Ascending aorta (tissue), 2 donors: ENCODE measurements at regions of chr4 and their contacts with region 1.

Region 1: DNA sequence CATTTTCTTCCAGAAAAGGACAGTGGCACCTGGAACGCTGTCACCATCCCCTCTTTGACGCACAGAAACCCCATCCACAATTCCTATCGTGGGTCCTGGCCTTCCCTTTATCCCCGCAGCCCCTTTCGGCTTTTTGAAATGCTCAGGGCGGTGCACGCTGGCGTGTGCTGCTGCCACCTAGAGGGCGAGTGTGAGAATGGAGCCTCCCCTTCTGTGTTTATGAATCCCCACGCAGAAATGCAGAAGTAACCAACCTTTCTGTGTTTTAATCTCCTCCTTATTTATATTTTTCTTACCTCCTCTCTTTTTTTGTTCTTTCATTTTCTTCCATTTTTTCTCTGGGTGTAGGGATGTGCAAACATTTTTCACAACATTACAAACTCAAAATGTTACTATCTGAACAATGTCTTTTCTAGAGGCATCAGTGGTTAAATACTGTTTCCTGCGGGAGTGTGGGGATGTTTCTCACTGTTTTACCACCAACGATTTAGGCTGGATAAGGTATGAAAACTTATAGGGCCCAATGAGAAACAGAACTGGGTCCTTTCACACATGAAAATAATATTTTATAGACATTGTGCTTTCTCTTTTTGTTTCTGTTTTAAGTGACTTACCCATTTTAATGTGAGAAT is 50.0 kb downstream of the TMA16 start:
- DNase-seq: peak in 1 of 2 donors; percentile 77
- H3K4me3 ChIP-seq: peak overlapping the region; percentile 34 to 53
- H3K27ac ChIP-seq: no peak overlapping the region
- H3K4me1 ChIP-seq: no peaks in the 10 kb centered on the region
- H3K27me3 ChIP-seq: no peaks in the 10 kb centered on the region
- CTCF ChIP-seq: peak; percentile 56 to 93 (median 90)

Region 2: GRCh38 chr4:162497564-162498167 is 1046.9 kb before region 1 on chr4:
- intact Hi-C with region 1: loop called (anchors 2 kb)
- DNase-seq: no peak
- H3K4me3 ChIP-seq: peak overlapping the region in 1 of 2 donors; percentile 5
- H3K27ac ChIP-seq: no peak overlapping the region
- H3K4me1 ChIP-seq: no peaks in the 10 kb centered on the region
- H3K27me3 ChIP-seq: no peaks in the 10 kb centered on the region
- CTCF ChIP-seq: peak; percentile 67 to 88 (median 77)

Region 3: DNA sequence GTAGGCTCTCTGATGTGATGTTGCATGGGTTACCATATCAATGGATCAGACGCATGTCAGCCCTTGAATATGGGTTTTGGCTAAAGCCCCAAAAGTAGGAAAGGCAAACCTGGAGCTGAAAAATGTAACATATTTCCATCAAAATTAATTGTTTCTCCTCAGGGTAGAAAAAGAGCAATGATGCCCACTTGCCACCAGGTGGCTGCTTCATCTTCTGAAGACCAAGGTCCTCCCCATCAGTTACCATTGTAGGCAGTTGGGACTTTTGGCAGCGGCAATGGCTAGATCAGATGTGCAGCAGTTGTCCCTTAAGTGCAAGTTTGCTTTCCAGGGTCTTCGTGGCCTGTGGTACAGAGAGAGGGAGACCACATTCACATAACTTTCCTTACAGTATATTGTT is 496.1 kb before region 1 on chr4:
- intact Hi-C with region 1: loop called (anchors 10 kb)
- DNase-seq: no peak
- H3K4me3 ChIP-seq: no peak overlapping the region
- H3K27ac ChIP-seq: no peak overlapping the region
- H3K4me1 ChIP-seq: peaks cover 0 to 9% of the 10 kb centered on the region in 2 donors
- H3K27me3 ChIP-seq: no peaks in the 10 kb centered on the region
- CTCF ChIP-seq: peak in 1 of 3 experiments; percentile 35

Region 4: DNA sequence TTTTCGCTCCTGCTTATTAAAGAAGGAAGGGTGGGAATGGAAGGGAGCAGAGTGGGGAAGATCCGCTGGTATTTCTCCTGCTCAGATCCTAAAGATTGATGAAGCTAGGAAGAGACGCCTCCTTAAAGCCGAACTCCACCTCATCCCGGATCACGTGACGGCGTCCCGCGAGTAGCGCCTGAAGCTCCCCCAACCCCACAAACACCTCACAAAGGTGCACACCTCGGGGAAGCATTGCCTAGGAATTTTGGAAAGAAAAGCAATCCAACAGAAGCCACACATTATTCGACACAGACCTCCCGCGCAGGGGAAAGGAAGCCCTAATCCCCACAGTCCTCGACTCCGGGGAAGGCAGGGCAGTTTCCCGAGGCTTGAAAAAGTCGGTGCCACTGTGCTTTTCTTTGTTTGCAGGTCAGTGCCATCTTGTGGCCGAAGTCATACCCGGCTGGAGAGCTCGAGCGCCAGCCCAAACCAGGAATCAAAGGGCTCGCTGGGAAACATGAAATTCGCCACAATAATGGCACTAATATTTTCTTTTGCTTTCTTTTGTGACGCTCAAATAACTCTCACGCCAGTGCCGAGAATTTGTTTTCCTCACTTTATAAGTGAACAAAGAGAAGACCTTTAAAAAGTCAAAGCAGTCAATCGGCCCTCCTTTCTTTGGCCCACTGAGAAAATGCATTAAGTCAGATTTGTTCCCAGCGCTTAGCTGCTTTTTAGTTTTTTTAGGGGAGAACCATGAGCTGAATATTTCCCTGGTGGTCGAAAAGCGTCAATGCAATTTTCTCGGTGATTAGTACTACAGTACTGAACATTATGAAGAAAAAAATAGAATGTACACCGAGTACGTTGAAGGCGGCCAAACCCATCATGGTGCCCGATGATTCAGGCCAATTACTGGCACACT is 211.8 kb before region 1 on chr4 and contains the start of gene NPY1R:
- intact Hi-C with region 1: loop called (anchors 5 kb)
- DNase-seq: peak; percentile 8 to 88
- H3K4me3 ChIP-seq: peak within 1 kb of the TSS; percentile 73 to 74
- H3K27ac ChIP-seq: peak within 1 kb of the TSS; percentile 73 to 90
- H3K4me1 ChIP-seq: peaks cover 0 to 9% of the 10 kb centered on the region in 2 donors
- H3K27me3 ChIP-seq: no peaks in the 10 kb centered on the region
- CTCF ChIP-seq: peak in 2 of 3 experiments; percentile 62 to 70
- total RNA-seq, gene NPY1R: 248 TPM

Region 5: GRCh38 chr4:163494360-163495162 is 50.0 kb before region 1 on chr4 and contains the start of gene TMA16:
- intact Hi-C with region 1: loop called (anchors 2 kb)
- DNase-seq: peak; percentile 37 to 92
- H3K4me3 ChIP-seq: peak within 1 kb of the TSS; percentile 83 to 90
- H3K27ac ChIP-seq: peak within 1 kb of the TSS; percentile 75 to 88
- H3K4me1 ChIP-seq: peaks cover 2 to 9% of the 10 kb centered on the region in 2 donors
- H3K27me3 ChIP-seq: no peaks in the 10 kb centered on the region
- CTCF ChIP-seq: no peak
- total RNA-seq, gene TMA16: 36.9 TPM

Region 6: DNA sequence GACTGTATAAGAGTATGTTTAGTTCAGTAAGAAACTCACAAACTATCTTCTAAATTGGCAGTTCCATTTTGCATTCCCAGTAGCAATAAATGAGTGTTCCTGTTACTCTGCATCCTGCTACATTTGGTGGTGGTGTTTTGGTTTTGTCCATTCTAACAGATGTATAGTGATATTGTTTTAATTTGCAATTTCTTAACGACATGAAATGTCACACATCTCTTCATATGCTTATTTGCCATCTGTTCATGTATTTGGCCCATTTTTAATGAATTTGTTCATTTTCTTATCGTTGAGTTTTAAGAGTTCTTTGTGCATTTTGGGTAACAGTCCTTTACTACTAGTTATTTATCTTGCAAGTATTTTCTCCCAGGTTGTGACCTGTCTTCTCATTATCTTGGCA is 182.1 kb after region 1 on chr4:
- intact Hi-C with region 1: no loop called
- DNase-seq: no peak
- H3K4me3 ChIP-seq: no peak overlapping the region
- H3K27ac ChIP-seq: no peak overlapping the region
- H3K4me1 ChIP-seq: no peaks in the 10 kb centered on the region
- H3K27me3 ChIP-seq: no peaks in the 10 kb centered on the region
- CTCF ChIP-seq: no peak